ENCODE measurements at regions of chr22 and their contacts with region 1.

Region 1: GRCh38 chr22:46367707-46368191 is 32.2 kb downstream of the TRMU start:
- DNase-seq: peak in 3 of 4 donors; percentile 60 to 92 (median 62)
- ATAC-seq: peak; percentile 86
- H3K4me3 ChIP-seq: no peak overlapping the region
- H3K27ac ChIP-seq: no peak overlapping the region
- H3K4me1 ChIP-seq: peaks cover 0 to 6% of the 10 kb centered on the region in 2 donors
- H3K27me3 ChIP-seq: peaks cover 0 to 34% of the 10 kb centered on the region in 2 donors
- CTCF ChIP-seq: peak; percentile 78 to 86

Region 2: DNA sequence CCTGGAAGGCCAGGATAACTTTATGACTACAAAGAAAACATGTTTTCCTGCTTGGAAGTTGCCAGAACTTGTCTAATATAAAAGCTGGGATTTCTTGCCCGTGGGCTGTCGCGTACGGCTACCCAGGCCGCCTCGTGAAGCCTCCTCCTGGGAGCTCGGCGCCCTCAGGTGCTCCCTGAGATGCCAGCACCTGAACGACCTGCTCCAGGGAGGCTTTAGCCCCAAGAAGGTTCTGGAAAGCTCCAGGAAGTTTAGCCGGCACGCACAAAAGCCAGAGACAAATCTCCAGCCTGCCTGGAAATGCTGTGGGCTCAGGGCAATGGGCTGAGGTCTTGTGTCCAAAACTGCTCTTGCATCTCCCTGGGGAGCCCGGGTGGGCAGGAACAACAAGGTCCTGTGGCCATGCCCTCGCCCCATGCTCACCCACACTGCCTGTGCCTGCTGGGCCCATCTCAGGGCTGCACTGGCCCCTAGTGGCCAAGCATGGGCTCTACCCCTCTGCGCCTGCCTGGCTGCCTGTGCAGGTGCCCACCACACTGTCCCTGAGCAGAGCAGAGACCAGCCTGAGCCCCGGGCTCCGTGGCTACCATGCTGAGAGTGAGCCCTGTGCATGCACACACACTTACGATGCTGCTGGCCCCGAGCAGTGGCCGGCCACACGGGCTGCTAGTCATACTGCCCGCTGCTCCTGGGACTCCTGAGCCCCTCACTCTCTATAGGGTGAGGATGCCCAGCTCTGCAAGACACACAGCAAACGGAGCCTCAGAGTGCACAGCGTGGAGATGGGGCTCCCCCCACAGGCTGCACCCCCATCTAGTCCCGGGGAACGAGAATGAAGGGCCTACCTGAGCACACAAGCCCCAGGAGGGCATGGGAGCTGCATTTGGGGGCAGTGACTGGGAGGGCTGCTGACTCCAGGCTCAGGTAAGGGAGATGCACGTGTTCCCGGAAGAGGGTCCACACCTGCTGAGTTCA is 174.5 kb after region 1 on chr22:
- intact Hi-C with region 1: loop called in 1 of 2 experiments (anchors 5 kb)
- DNase-seq: peak in 3 of 4 donors; percentile 74 to 92 (median 77)
- ATAC-seq: peak; percentile 73
- H3K4me3 ChIP-seq: no peak overlapping the region
- H3K27ac ChIP-seq: peak overlapping the region in 1 of 2 donors; percentile 69
- H3K4me1 ChIP-seq: peaks cover 13 to 41% of the 10 kb centered on the region in 2 donors
- H3K27me3 ChIP-seq: peaks cover 0 to 53% of the 10 kb centered on the region in 2 donors
- CTCF ChIP-seq: peak; percentile 94 to 96